ENCODE measurements at regions of chr17 and their contacts with region 1.

Region 1: DNA sequence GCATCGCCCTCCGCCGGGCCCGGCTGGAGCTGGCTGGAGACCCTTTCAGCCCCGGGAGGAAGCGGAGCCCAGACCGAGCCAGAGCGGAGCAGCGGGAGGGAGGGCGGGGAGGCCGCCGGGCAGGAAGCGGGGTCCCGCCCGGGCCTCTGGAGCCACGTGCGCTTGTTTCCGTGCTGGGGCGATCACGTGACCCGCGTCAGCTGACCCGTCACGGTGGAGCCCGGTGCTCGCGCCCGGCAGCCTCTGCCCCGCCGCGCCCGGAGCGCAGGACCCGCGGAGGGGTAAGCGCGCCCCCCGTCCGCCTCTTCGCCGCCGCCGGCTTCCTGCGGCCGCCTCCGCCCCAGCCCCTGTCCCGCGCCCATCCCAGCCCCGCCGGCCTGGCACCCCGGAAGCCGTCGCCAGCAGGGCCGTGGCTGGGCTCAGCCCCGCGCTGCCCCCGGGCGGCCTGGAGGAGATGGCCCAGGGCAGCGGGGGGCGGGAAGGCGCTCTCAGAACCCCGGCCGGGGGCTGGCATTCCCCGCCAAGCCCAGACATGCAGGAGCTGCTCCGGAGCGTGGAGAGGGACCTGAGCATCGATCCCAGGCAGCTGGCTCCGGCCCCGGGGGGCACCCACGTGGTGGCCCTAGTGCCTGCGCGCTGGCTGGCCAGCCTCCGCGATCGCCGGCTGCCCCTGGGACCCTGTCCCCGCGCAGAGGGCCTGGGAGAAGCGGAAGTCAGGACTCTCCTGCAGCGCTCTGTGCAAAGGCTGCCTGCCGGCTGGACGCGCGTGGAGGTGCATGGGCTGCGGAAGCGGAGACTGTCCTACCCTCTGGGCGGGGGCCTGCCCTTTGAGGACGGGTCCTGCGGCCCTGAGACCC is at the start of gene WDR81:
- DNase-seq: peak; percentile 82 to 91 (median 85)
- H3K4me3 ChIP-seq: peak within 1 kb of the TSS; percentile 65
- H3K4me3 Mint-ChIP-seq: peak within 1 kb of the TSS; percentile 72 to 89 (median 86)
- H3K27ac ChIP-seq: peak within 1 kb of the TSS; percentile 59
- H3K27ac Mint-ChIP-seq: peak within 1 kb of the TSS; percentile 61 to 96 (median 84)
- H3K4me1 ChIP-seq: peaks cover 42% of the 10 kb centered on the region
- H3K4me1 Mint-ChIP-seq: peaks cover 31 to 61% (median 33%) of the 10 kb centered on the region in 3 donors
- H3K27me3 ChIP-seq: no peaks in the 10 kb centered on the region
- H3K27me3 Mint-ChIP-seq: peaks cover 0 to 2% of the 10 kb centered on the region in 2 donors
- total RNA-seq, gene WDR81: 21.1 to 23.7 TPM

Region 2: GRCh38 chr17:1447052-1447451 is 277.7 kb before region 1 on chr17:
- CTCF ChIA-PET with region 1: no interaction called
- POLR2A ChIA-PET with region 1: no interaction called
- DNase-seq: no peak
- H3K4me3 ChIP-seq: no peak overlapping the region
- H3K4me3 Mint-ChIP-seq: peak overlapping the region in 1 of 7 donors; percentile 3
- H3K27ac ChIP-seq: no peak overlapping the region
- H3K27ac Mint-ChIP-seq: peak overlapping the region in 2 of 8 donors; percentile 36 to 66
- H3K4me1 ChIP-seq: peaks cover 14% of the 10 kb centered on the region
- H3K4me1 Mint-ChIP-seq: peaks cover 39 to 61% (median 39%) of the 10 kb centered on the region in 3 donors
- H3K27me3 ChIP-seq: no peaks in the 10 kb centered on the region
- H3K27me3 Mint-ChIP-seq: no peaks in the 10 kb centered on the region

Region 3: DNA sequence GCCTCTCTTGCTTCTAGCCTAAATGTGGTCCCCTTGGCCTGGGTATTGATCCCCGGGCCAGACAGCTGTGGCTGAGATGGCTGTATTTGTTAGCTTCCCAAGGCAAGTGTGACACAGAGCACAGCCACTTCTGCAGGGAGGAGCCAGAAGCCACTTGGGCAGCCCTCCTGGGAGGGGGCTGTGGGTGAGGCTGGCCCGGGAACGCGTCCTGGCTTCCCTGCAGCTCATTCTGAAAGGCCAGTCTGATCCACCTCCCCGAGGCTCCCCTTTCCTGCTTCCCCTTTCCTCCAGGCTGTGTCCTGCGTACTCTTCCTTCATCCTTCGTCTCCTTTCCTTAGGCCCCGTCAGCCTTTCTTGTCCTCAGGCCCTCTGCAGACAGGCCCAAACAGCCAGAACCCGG is 25.9 kb after region 1 on chr17:
- CTCF ChIA-PET with region 1: no interaction called
- POLR2A ChIA-PET with region 1: no interaction called
- DNase-seq: no peak
- H3K4me3 ChIP-seq: no peak overlapping the region
- H3K4me3 Mint-ChIP-seq: no peak overlapping the region
- H3K27ac ChIP-seq: no peak overlapping the region
- H3K27ac Mint-ChIP-seq: no peak overlapping the region
- H3K4me1 ChIP-seq: no peaks in the 10 kb centered on the region
- H3K4me1 Mint-ChIP-seq: no peaks in the 10 kb centered on the region
- H3K27me3 ChIP-seq: no peaks in the 10 kb centered on the region
- H3K27me3 Mint-ChIP-seq: no peaks in the 10 kb centered on the region

Region 4: DNA sequence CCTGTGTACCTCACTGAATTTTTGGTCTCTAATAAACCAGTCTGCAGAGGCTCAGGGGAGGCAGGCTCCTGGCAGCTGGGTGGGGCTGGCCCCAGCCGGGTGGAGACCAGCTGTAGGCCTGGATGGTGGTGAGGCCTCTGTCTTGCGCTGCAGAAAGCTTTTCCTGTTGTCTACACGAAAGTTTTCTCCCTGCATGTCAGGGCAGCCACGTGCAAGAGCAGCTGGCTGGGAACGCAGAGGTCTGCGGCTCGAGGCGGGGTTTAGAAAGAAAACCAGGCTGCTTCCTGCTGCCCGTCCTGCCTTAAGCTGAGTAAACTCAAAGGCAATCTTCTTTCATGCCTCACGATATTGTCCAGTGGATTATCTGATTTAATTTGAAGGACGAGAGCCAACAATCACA is 39.5 kb after region 1 on chr17:
- CTCF ChIA-PET with region 1: interaction called, 6 read pairs
- POLR2A ChIA-PET with region 1: interaction called, 14 read pairs
- DNase-seq: peak in 4 of 5 donors; percentile 43 to 72 (median 70)
- H3K4me3 ChIP-seq: no peak overlapping the region
- H3K4me3 Mint-ChIP-seq: peak overlapping the region in 5 of 7 donors; percentile 61 to 79 (median 69)
- H3K27ac ChIP-seq: no peak overlapping the region
- H3K27ac Mint-ChIP-seq: peak overlapping the region; percentile 68 to 95 (median 89)
- H3K4me1 ChIP-seq: peaks cover 35% of the 10 kb centered on the region
- H3K4me1 Mint-ChIP-seq: peaks cover 30 to 38% (median 31%) of the 10 kb centered on the region in 3 donors
- H3K27me3 ChIP-seq: no peaks in the 10 kb centered on the region
- H3K27me3 Mint-ChIP-seq: no peaks in the 10 kb centered on the region

Region 5: DNA sequence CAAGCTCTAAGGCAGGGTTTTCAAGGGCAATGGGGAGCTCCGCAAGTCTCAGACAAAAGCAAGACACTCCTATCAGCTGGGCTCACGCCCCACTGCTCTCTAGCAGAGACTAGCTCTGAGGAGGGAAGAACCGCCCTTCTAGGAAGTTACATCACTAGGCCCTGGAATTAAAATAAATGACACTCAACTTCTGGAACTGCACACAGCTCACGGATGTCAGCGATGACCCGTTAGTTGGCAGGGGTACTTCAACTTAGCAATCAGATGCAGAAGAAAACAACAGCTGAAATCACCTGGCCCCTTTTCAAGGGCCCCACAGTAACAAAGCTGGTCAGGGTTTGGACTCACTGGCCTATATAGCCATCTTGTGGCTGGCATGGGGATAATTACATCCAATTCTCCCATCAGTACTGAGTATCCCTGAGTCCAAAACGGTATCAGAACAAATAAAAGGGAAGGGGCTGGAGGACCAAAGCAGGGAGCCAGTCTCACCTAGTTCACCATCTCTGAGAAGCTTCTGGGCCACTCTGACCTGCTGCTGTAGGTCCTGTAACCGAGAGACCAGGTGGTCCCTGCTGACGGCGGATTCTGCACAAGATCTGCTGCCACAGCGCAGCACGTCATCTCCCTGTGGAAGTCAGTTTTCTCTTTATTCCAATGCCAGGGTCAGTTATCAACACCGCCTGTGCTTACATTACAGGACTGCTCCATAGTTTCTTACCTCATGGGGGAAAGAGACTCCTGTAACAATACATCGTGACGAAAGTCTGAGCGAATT is 59.3 kb after region 1 on chr17:
- CTCF ChIA-PET with region 1: interaction called, 41 read pairs
- POLR2A ChIA-PET with region 1: interaction called, 6 read pairs
- DNase-seq: no peak
- H3K4me3 ChIP-seq: no peak overlapping the region
- H3K4me3 Mint-ChIP-seq: no peak overlapping the region
- H3K27ac ChIP-seq: no peak overlapping the region
- H3K27ac Mint-ChIP-seq: peak overlapping the region in 2 of 8 donors; percentile 11 to 38
- H3K4me1 ChIP-seq: no peaks in the 10 kb centered on the region
- H3K4me1 Mint-ChIP-seq: peaks cover 6 to 10% (median 6%) of the 10 kb centered on the region in 3 donors
- H3K27me3 ChIP-seq: no peaks in the 10 kb centered on the region
- H3K27me3 Mint-ChIP-seq: no peaks in the 10 kb centered on the region

Region 6: DNA sequence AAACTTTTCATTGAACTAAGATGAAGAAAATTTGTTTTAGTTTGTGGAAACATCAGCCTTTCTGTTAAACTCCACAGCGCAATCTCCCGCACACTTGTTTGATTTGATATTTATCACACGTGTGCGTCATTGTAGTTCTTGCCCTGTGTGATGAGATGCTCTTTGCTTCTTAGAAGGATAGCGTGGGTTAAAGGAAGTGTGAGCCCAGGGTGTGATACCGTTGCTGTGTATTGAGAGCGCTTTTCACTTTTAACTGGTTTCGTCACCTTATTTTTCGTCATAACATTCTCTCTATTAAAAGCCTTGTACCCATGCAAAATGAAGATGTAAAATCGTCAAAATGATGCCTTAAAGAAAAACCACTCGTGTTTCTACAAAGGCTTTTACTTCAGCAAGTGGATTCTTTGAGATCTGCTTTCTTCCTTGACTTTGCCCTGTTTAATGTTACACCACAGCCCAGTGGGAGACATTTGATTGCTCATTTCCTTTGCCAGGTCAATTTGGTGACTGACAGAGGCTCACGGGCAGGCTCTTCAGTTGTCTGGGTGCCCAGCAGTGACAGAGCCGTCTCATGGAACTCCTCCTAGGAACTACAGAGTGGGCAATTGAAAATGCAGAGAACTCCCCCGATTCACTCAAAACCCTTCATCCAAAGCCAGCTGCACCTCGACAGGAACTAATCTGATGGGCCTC is 166.2 kb after region 1 on chr17:
- CTCF ChIA-PET with region 1: no interaction called
- POLR2A ChIA-PET with region 1: no interaction called
- DNase-seq: peak; percentile 11 to 71 (median 23)
- H3K4me3 ChIP-seq: no peak overlapping the region
- H3K4me3 Mint-ChIP-seq: peak overlapping the region in 6 of 7 donors; percentile 7 to 71 (median 62)
- H3K27ac ChIP-seq: peak overlapping the region; percentile 57
- H3K27ac Mint-ChIP-seq: peak overlapping the region; percentile 82 to 97 (median 93)
- H3K4me1 ChIP-seq: no peaks in the 10 kb centered on the region
- H3K4me1 Mint-ChIP-seq: peaks cover 10 to 12% (median 12%) of the 10 kb centered on the region in 3 donors
- H3K27me3 ChIP-seq: no peaks in the 10 kb centered on the region
- H3K27me3 Mint-ChIP-seq: no peaks in the 10 kb centered on the region